Caco-2 (cell line): ENCODE measurements at regions of chr7 and their contacts with region 1.

Region 1: GRCh38 chr7:109844362-109844761 is 1246.6 kb upstream of the LRRN3 start:
- DNase-seq: peak in 1 of 2 experiments; percentile 37
- H3K4me3 ChIP-seq: no peak overlapping the region
- H3K4me3 Mint-ChIP-seq: no peak overlapping the region
- H3K27ac Mint-ChIP-seq: no peak overlapping the region
- H3K4me1 ChIP-seq: no peaks in the 10 kb centered on the region
- H3K4me1 Mint-ChIP-seq: no peaks in the 10 kb centered on the region
- H3K27me3 ChIP-seq: no peaks in the 10 kb centered on the region
- H3K27me3 Mint-ChIP-seq: peaks cover 5% of the 10 kb centered on the region
- CTCF ChIP-seq: peak; percentile 62 to 71

Region 2: GRCh38 chr7:110090110-110090769 is 245.9 kb after region 1 on chr7:
- CTCF ChIA-PET with region 1: no interaction called
- POLR2A ChIA-PET with region 1: no interaction called
- intact Hi-C with region 1: loop called (anchors 1 kb)
- DNase-seq: peak in 1 of 2 experiments; percentile 52
- H3K4me3 ChIP-seq: no peak overlapping the region
- H3K4me3 Mint-ChIP-seq: no peak overlapping the region
- H3K27ac Mint-ChIP-seq: no peak overlapping the region
- H3K4me1 ChIP-seq: no peaks in the 10 kb centered on the region
- H3K4me1 Mint-ChIP-seq: no peaks in the 10 kb centered on the region
- H3K27me3 ChIP-seq: no peaks in the 10 kb centered on the region
- H3K27me3 Mint-ChIP-seq: peaks cover 2% of the 10 kb centered on the region
- CTCF ChIP-seq: peak; percentile 65 to 66

Region 3: DNA sequence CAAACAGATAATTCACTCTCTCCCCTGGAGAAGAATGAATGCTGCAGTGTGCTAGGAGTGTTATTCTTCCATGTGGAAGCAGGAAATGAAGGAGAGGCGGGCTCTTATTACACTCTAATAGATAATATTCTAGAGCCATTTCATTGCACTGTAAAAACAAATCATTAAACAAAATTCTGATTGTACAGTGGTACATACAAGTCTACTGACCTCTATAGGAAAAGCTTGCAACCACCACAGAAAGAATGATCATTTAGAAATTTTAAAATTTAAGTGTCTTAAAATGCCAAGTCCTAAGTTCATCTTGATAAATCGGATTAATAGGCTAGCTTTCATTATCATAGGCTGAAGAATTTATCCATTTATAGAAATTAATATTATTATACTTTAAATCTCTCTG is 286.3 kb after region 1 on chr7:
- CTCF ChIA-PET with region 1: no interaction called
- POLR2A ChIA-PET with region 1: no interaction called
- intact Hi-C with region 1: loop called (anchors 2 kb)
- DNase-seq: no peak
- H3K4me3 ChIP-seq: no peak overlapping the region
- H3K4me3 Mint-ChIP-seq: no peak overlapping the region
- H3K27ac Mint-ChIP-seq: no peak overlapping the region
- H3K4me1 ChIP-seq: no peaks in the 10 kb centered on the region
- H3K4me1 Mint-ChIP-seq: no peaks in the 10 kb centered on the region
- H3K27me3 ChIP-seq: no peaks in the 10 kb centered on the region
- H3K27me3 Mint-ChIP-seq: no peaks in the 10 kb centered on the region
- CTCF ChIP-seq: peak in 1 of 2 experiments; percentile 23

Region 4: DNA sequence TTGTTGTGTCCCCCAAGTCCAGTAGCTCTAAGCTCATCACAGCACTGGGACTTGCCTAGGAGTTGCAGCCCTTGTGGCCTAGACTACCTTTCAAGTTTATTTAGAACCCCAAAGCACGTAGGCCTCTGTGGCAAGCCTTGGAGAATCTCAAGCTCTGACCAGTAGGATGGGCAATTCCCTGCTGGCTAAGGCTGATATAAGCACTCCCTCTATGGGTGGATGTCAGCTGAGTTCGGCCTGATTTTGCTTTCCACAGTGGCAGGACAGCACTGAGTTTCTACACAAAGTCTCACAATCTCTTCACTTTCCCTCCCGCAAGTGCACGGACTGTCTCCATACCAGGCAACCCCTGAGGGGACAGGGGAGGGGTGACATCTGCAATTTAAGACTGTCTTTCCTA is 360.2 kb after region 1 on chr7:
- CTCF ChIA-PET with region 1: no interaction called
- POLR2A ChIA-PET with region 1: no interaction called
- intact Hi-C with region 1: loop called (anchors 1 kb)
- DNase-seq: peak; percentile 42 to 51
- H3K4me3 ChIP-seq: no peak overlapping the region
- H3K4me3 Mint-ChIP-seq: no peak overlapping the region
- H3K27ac Mint-ChIP-seq: no peak overlapping the region
- H3K4me1 ChIP-seq: no peaks in the 10 kb centered on the region
- H3K4me1 Mint-ChIP-seq: no peaks in the 10 kb centered on the region
- H3K27me3 ChIP-seq: no peaks in the 10 kb centered on the region
- H3K27me3 Mint-ChIP-seq: peaks cover 13% of the 10 kb centered on the region
- CTCF ChIP-seq: peak in 1 of 2 experiments; percentile 56

Region 5: DNA sequence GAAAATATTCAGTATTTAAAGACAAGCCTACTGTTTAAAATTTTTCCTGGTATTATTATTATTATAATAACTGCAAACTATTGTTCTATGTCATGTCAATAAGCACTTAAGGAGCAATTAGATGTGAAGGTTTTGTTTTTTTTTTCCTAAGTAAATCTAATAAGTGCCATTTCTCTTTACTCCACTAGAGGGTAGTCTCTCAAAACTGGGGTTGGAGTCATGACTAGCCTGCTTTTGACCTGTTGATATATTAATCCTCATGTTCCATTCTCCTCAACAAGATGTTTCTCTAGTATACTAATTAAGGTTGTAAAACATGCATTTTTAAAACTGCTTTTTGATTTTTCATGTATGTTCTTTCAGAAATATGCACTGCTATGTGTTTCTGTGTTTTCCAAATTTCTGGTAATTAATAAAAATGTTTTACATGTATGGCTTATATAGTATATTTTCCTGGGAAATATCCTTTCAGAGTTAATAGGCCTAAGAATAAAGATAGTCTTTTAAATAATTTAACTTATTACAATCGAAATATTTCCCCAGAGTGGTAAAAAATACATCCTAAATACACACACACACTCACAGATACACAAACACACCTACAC is 1245.6 kb after region 1 on chr7:
- CTCF ChIA-PET with region 1: no interaction called
- POLR2A ChIA-PET with region 1: no interaction called
- intact Hi-C with region 1: loop called (anchors 1 kb)
- DNase-seq: peak in 1 of 2 experiments; percentile 26
- H3K4me3 ChIP-seq: no peak overlapping the region
- H3K4me3 Mint-ChIP-seq: no peak overlapping the region
- H3K27ac Mint-ChIP-seq: no peak overlapping the region
- H3K4me1 ChIP-seq: no peaks in the 10 kb centered on the region
- H3K4me1 Mint-ChIP-seq: no peaks in the 10 kb centered on the region
- H3K27me3 ChIP-seq: no peaks in the 10 kb centered on the region
- H3K27me3 Mint-ChIP-seq: no peaks in the 10 kb centered on the region
- CTCF ChIP-seq: peak; percentile 50 to 63

Region 6: GRCh38 chr7:111098011-111098925 is 1253.9 kb after region 1 on chr7:
- CTCF ChIA-PET with region 1: no interaction called
- POLR2A ChIA-PET with region 1: no interaction called
- intact Hi-C with region 1: loop called (anchors 1 kb)
- DNase-seq: peak in 1 of 2 experiments; percentile 32
- H3K4me3 ChIP-seq: no peak overlapping the region
- H3K4me3 Mint-ChIP-seq: no peak overlapping the region
- H3K27ac Mint-ChIP-seq: no peak overlapping the region
- H3K4me1 ChIP-seq: no peaks in the 10 kb centered on the region
- H3K4me1 Mint-ChIP-seq: no peaks in the 10 kb centered on the region
- H3K27me3 ChIP-seq: no peaks in the 10 kb centered on the region
- H3K27me3 Mint-ChIP-seq: no peaks in the 10 kb centered on the region
- CTCF ChIP-seq: peak; percentile 38 to 54